PC-3 (cell line): ENCODE measurements at regions of chr4 and their contacts with region 1.

Region 1: DNA sequence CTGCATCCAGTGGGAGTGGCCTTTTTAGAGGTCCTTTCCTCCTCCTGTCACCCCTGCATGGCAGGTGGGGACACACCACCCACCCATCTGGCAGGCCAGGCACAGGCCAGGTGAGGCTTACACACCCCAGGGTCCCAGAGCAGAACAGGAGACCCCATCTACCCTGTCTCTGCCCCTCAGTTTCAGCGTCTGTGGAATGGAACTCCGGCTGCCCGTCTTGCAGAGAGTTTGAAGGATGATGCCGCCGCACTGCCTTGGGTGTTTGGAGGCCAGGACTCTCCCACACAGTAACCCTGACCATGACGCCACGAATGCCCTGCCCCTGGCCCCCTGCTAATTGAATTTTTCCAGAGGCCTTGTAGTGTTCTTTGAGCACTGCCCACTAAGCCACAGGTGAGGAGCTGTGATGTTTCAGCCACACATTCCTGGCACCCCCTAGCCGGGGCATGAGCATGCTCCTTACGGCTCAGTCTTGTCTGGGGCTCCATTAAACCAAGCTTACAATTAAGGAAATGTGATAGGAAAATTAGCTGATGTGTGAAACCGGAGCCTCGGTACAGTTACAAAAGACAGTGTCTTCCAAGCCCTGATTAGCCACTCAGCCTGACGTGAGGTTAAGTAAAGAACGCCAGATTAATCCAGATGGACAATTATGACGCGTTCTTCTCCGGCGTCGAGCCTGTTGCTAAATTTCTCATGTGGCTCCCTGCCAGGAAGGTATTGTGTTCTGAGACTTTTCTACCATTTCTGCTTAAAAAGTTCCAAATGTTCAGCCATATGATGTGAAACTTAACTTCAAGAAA is 39.3 kb downstream of the HMX1 start:
- DNase-seq: no peak
- ATAC-seq: no peak
- H3K4me3 ChIP-seq: no peak overlapping the region
- H3K27ac ChIP-seq: no peak overlapping the region
- H3K4me1 ChIP-seq: no peaks in the 10 kb centered on the region
- H3K27me3 ChIP-seq: no peaks in the 10 kb centered on the region; the same call in 1 of the 2 replicates
- CTCF ChIP-seq: no peak

Region 2: GRCh38 chr4:8819473-8820177 is 12.7 kb before region 1 on chr4:
- CTCF ChIA-PET with region 1: interaction called, 10 read pairs
- POLR2A ChIA-PET with region 1: no interaction called
- intact Hi-C with region 1: no loop called
- DNase-seq: no peak
- ATAC-seq: no peak
- H3K4me3 ChIP-seq: no peak overlapping the region
- H3K27ac ChIP-seq: no peak overlapping the region
- H3K4me1 ChIP-seq: no peaks in the 10 kb centered on the region
- H3K27me3 ChIP-seq: no peaks in the 10 kb centered on the region
- CTCF ChIP-seq: 0 out of 2 replicates have a peak, but pooled peaks have one; percentile 13